Activated naive CD8-positive, alpha-beta T cell treated with anti-CD3 and anti-CD28 coated beads, Interleukin-2, amount 10 ng/mL, durations not matched to agents 7 days and 5 days (primary cell): ENCODE measurements at regions of chr9 and their contacts with region 1.

Region 1: GRCh38 chr9:125200210-125201047 is at the start of gene RABEPK:
- DNase-seq: peak; percentile 97
- ATAC-seq: peak; percentile 97
- H3K4me3 Mint-ChIP-seq: peak within 1 kb of the TSS; percentile 91
- H3K27ac Mint-ChIP-seq: peak within 1 kb of the TSS; percentile 85
- H3K4me1 Mint-ChIP-seq: peaks cover 15% of the 10 kb centered on the region
- H3K27me3 Mint-ChIP-seq: peaks cover 4% of the 10 kb centered on the region
- total RNA-seq, gene RABEPK: 9.9 to 12.3 TPM

Region 2: GRCh38 chr9:125146247-125146646 is 54.2 kb before region 1 on chr9:
- POLR2A ChIA-PET with region 1: no interaction called
- DNase-seq: no peak
- ATAC-seq: no peak
- H3K4me3 Mint-ChIP-seq: no peak overlapping the region
- H3K27ac Mint-ChIP-seq: no peak overlapping the region
- H3K4me1 Mint-ChIP-seq: peaks cover 21% of the 10 kb centered on the region
- H3K27me3 Mint-ChIP-seq: no peaks in the 10 kb centered on the region

Region 3: GRCh38 chr9:125172031-125172755 is 28.2 kb before region 1 on chr9:
- POLR2A ChIA-PET with region 1: no interaction called
- DNase-seq: no peak
- ATAC-seq: no peak
- H3K4me3 Mint-ChIP-seq: no peak overlapping the region
- H3K27ac Mint-ChIP-seq: peak overlapping the region; percentile 18
- H3K4me1 Mint-ChIP-seq: peaks cover 14% of the 10 kb centered on the region
- H3K27me3 Mint-ChIP-seq: no peaks in the 10 kb centered on the region

Region 4: DNA sequence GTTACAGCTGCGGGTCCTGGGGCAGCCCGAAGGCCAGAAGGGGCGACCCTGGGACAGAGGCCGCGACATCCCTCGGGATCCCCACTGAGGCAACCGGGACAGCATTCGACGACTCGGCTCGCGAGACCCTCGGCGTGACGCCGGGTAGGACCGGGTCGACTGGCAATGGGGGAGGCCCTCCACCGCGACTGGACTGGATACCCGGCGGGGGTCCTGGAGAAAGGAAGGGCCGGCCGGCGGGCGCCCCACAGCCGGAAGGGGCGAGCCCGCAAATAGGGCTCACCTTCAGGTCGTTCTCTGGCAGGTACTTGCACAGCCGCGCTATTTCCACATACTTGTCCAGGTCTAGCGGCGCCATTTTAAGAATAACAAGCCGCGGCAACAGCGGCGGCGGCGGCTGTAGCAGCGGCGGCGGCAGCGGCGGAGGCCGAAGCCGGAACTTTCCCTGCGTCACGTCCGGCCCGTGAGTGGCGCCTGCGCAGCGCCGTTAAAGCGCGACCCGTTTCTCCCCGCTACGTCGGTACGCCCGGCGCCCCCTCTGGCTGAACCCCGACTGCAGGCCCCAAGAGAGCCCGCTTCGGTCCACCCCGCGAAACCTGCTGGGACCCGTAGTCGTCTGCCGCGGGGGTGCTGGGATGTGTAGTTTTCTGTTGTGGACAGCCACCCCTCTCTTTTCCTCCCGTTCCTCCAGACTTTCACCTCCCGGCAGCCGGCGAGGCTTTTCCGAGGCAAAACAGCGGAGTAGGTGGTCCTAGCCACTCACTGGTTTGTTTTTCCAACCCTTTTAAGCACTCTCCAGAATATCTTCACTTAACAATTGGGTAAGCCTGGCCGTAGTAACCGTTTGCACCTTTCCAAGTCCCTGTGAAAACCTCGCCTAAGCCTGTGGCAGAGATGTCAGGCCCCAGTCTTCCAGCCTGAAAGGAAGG is 10.8 kb before region 1 on chr9 and contains the start of gene PPP6C:
- POLR2A ChIA-PET with region 1: interaction called, 29 read pairs
- DNase-seq: peak; percentile 97
- ATAC-seq: peak; percentile 98
- H3K4me3 Mint-ChIP-seq: peak within 1 kb of the TSS; percentile 96
- H3K27ac Mint-ChIP-seq: peak within 1 kb of the TSS; percentile 96
- H3K4me1 Mint-ChIP-seq: peaks cover 29% of the 10 kb centered on the region
- H3K27me3 Mint-ChIP-seq: no peaks in the 10 kb centered on the region
- total RNA-seq, gene PPP6C: 48.8 to 50.4 TPM

Region 5: GRCh38 chr9:125308683-125309082 is 108.3 kb after region 1 on chr9:
- POLR2A ChIA-PET with region 1: interaction called, 10 read pairs
- DNase-seq: no peak
- ATAC-seq: no peak
- H3K4me3 Mint-ChIP-seq: no peak overlapping the region
- H3K27ac Mint-ChIP-seq: no peak overlapping the region
- H3K4me1 Mint-ChIP-seq: no peaks in the 10 kb centered on the region
- H3K27me3 Mint-ChIP-seq: no peaks in the 10 kb centered on the region